ENCODE measurements at regions of chr4 and their contacts with region 1.

Region 1: GRCh38 chr4:39697740-39698423 is at the start of gene UBE2K:
- DNase-seq: peak; percentile 87
- H3K4me3 Mint-ChIP-seq: peak within 1 kb of the TSS; percentile 93
- H3K27ac Mint-ChIP-seq: peak within 1 kb of the TSS; percentile 62
- H3K4me1 Mint-ChIP-seq: no peaks in the 10 kb centered on the region
- H3K27me3 Mint-ChIP-seq: no peaks in the 10 kb centered on the region
- CTCF ChIP-seq: no peak
- total RNA-seq, gene UBE2K: 66.9 and 77.7 TPM in 2 replicates

Region 2: DNA sequence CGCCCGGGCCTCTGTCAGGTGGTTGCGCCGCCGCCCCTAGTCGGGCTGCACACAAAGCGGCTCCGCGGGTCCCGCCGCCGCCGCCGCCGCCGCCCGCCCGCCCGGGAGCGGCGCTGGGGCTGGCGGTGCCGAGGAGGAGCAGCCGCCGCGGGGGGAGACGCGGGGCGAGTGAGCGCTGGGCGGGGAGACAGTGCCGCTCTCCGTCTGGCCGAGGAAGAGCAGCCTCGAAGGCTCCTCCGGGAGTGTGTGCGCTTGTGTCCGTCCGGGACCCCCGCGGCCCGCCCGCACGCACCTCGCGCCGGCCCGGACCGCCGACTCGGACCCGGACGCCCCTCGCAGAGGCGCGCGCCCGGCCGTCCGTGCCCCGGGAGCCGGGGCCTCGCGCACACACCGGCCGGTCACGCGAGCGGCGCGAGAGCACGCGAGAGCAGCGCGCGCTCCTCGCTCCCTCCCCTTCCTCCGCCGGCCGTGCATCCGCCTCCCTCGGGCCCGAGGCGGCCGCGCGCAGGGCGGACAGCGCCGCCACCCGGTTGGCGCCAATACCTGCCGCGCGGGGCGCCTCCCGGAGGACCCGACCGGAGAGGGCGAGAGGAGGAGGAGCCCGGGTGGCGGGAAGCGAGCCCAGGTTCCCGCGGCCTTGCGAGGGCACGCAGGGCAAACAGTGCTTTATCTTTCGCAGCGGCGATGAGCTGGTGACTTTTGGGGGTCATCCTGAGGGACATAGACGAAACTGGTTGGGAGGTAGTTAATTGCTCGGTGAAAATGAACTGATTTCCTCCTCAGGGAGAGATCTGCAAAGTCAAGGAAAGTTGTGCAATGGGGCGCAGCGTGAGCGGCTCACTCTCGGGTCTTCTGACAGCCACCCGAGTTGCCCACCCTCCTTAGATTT is 279.9 kb after region 1 on chr4 and contains the start of gene PDS5A:
- CTCF ChIA-PET with region 1: no interaction called
- intact Hi-C with region 1: loop called (anchors 2 kb)
- DNase-seq: peak; percentile 89
- H3K4me3 Mint-ChIP-seq: peak within 1 kb of the TSS; percentile 71
- H3K27ac Mint-ChIP-seq: no peak within 1 kb of the TSS
- H3K4me1 Mint-ChIP-seq: peaks cover 9% of the 10 kb centered on the region
- H3K27me3 Mint-ChIP-seq: no peaks in the 10 kb centered on the region
- CTCF ChIP-seq: peak; percentile 58
- total RNA-seq, gene PDS5A: 42.6 and 49.1 TPM in 2 replicates

Measured in Calu3 (cell line).